ENCODE measurements at regions of chr10 and their contacts with region 1.

Region 1: GRCh38 chr10:110042181-110042580 is 34.4 kb downstream of the ADD3 start:
- DNase-seq: peak; percentile 68
- H3K4me3 ChIP-seq: peak overlapping the region in 1 of 3 experiments; percentile 17
- H3K27ac ChIP-seq: no peak overlapping the region
- H3K4me1 ChIP-seq: peaks cover 10% of the 10 kb centered on the region
- H3K27me3 ChIP-seq: no peaks in the 10 kb centered on the region
- CTCF ChIP-seq: no peak
- POLR2A ChIP-seq: no peak

Region 2: DNA sequence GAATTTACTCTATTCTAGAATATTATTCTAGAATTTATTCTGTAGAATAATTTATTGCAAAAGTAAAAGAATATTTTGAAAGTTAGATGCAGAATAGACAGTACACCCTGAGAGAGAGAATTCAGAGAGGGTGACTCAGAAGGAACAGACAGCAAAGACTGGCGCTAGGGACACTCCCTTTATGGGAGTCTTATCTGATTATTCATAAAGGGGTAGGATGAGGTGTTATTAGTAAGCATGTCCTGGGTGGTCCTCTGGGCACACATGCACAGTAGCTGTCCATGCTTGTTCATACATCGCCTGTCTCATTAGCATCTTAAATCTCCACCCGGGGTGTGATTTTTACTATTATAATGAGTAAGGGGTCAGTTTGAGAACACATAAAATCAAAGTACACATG is 219.0 kb before region 1 on chr10:
- CTCF ChIA-PET with region 1: no interaction called
- POLR2A ChIA-PET with region 1: no interaction called
- dilution Hi-C with region 1: no loop called
- intact Hi-C with region 1: no loop called
- DNase-seq: no peak
- H3K4me3 ChIP-seq: no peak overlapping the region
- H3K27ac ChIP-seq: no peak overlapping the region
- H3K4me1 ChIP-seq: no peaks in the 10 kb centered on the region
- H3K27me3 ChIP-seq: no peaks in the 10 kb centered on the region
- CTCF ChIP-seq: no peak
- POLR2A ChIP-seq: no peak

Region 3: GRCh38 chr10:109978481-109978880 is 63.7 kb before region 1 on chr10:
- CTCF ChIA-PET with region 1: interaction called, 3 read pairs
- POLR2A ChIA-PET with region 1: no interaction called
- dilution Hi-C with region 1: no loop called
- intact Hi-C with region 1: loop called (anchors 1 kb)
- DNase-seq: peak; percentile 66
- H3K4me3 ChIP-seq: no peak overlapping the region
- H3K27ac ChIP-seq: no peak overlapping the region
- H3K4me1 ChIP-seq: no peaks in the 10 kb centered on the region
- H3K27me3 ChIP-seq: no peaks in the 10 kb centered on the region
- CTCF ChIP-seq: peak; percentile 71 to 77
- POLR2A ChIP-seq: no peak

Region 4: GRCh38 chr10:110059925-110060324 is 17.7 kb after region 1 on chr10:
- CTCF ChIA-PET with region 1: interaction called, 6 read pairs
- POLR2A ChIA-PET with region 1: interaction called, 10 read pairs
- dilution Hi-C with region 1: no loop called
- intact Hi-C with region 1: loop called (anchors 2 kb)
- DNase-seq: peak; percentile 47
- H3K4me3 ChIP-seq: no peak overlapping the region
- H3K27ac ChIP-seq: no peak overlapping the region
- H3K4me1 ChIP-seq: peaks cover 14% of the 10 kb centered on the region
- H3K27me3 ChIP-seq: no peaks in the 10 kb centered on the region
- CTCF ChIP-seq: no peak
- POLR2A ChIP-seq: no peak

Region 5: GRCh38 chr10:110967645-110968044 is 925.5 kb after region 1 on chr10:
- CTCF ChIA-PET with region 1: no interaction called
- POLR2A ChIA-PET with region 1: no interaction called
- dilution Hi-C with region 1: no loop called
- intact Hi-C with region 1: no loop called
- DNase-seq: no peak
- H3K4me3 ChIP-seq: no peak overlapping the region
- H3K27ac ChIP-seq: no peak overlapping the region
- H3K4me1 ChIP-seq: peaks cover 7% of the 10 kb centered on the region
- H3K27me3 ChIP-seq: no peaks in the 10 kb centered on the region
- CTCF ChIP-seq: no peak
- POLR2A ChIP-seq: no peak

Measured in endothelial cell of umbilical vein (primary cell).